HepG2 (cell line): ENCODE measurements at regions of chr1 and their contacts with region 1.

Region 1: DNA sequence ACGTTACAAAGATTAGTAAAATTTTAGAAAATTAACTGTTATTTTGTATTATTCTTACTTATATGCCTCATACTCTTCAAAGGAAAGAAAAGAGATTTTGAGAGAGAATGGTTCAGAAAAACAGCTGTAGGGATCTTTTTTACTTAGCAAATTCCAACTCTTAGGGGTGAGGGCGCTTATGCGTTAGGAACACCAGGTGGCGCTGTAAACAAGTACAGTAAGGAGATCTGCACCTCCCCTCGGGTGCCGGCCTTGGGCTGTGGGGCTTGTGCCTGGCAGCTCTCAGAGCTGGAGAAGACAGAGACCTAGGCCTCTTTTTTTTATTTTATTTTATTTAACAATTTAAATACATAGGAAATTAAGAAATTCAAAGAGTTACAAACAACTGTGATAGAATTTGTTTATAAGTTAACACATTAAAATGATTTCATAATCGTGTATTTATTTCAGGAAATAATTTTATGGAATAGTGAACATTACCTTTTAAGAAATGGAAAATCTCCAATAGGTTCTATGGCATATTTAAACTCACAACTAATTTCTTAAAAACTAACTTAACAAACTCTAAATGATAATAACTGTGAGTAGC is 32.6 kb downstream of the UTP25 start:
- DNase-seq: peak; percentile 72
- ATAC-seq: peak; percentile 97
- H3K4me3 ChIP-seq: no peak overlapping the region
- H3K27ac ChIP-seq: no peak overlapping the region
- H3K4me1 ChIP-seq: no peaks in the 10 kb centered on the region
- H3K27me3 ChIP-seq: no peaks in the 10 kb centered on the region; a peak in 1 of 5 replicates
- CTCF ChIP-seq: peak; percentile 81
- EP300 ChIP-seq: no peak
- POLR2A ChIP-seq: no peak
- RAD21 ChIP-seq: peak; percentile 50

Region 2: DNA sequence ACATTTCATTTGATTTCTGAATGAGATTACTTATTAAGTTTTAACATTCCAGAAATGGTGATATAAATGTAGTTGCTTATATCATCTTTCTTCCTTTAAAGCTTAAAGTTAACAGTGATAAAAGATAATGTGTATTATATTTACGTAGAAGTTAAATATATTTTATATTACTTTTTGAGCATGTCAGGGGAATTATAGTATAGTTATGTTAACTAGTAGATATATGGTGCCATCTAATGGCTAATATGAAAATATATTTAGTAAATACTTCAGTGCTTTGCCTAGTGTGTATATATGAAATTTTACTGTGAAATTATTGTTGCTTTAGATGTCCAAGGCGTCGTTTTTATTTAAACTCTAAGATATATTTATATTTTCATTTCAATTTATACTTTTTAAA is 129.1 kb after region 1 on chr1:
- CTCF ChIA-PET with region 1: interaction called, 27 read pairs
- POLR2A ChIA-PET with region 1: no interaction called
- in situ Hi-C with region 1: loop called (anchors 5 kb)
- intact Hi-C with region 1: loop called (anchors 1 kb)
- DNase-seq: no peak
- ATAC-seq: no peak
- H3K4me3 ChIP-seq: no peak overlapping the region
- H3K27ac ChIP-seq: no peak overlapping the region
- H3K4me1 ChIP-seq: no peaks in the 10 kb centered on the region
- H3K27me3 ChIP-seq: no peaks in the 10 kb centered on the region
- CTCF ChIP-seq: no peak
- EP300 ChIP-seq: no peak
- POLR2A ChIP-seq: no peak
- RAD21 ChIP-seq: no peak

Region 3: GRCh38 chr1:210301615-210302000 is 441.2 kb after region 1 on chr1:
- CTCF ChIA-PET with region 1: no interaction called
- POLR2A ChIA-PET with region 1: no interaction called
- in situ Hi-C with region 1: loop called (anchors 25 kb)
- intact Hi-C with region 1: no loop called
- DNase-seq: no peak
- ATAC-seq: no peak
- H3K4me3 ChIP-seq: no peak overlapping the region
- H3K27ac ChIP-seq: no peak overlapping the region
- H3K4me1 ChIP-seq: no peaks in the 10 kb centered on the region
- H3K27me3 ChIP-seq: peaks cover 1 to 6% of the 10 kb centered on the region in 2 experiments; a peak in 1 of 5 replicates
- CTCF ChIP-seq: no peak
- EP300 ChIP-seq: no peak
- POLR2A ChIP-seq: no peak
- RAD21 ChIP-seq: no peak